GM12878 (cell line): ENCODE measurements at regions of chr11 and their contacts with region 1.

Region 1: GRCh38 chr11:67345920-67346799 is 7.2 kb downstream of the POLD4 start:
- DNase-seq: peak; percentile 24
- ATAC-seq: peak; percentile 72
- H3K4me3 ChIP-seq: no peak overlapping the region
- H3K27ac ChIP-seq: peak overlapping the region; percentile 35
- H3K4me1 ChIP-seq: peaks cover 52% of the 10 kb centered on the region
- H3K27me3 ChIP-seq: no peaks in the 10 kb centered on the region
- CTCF ChIP-seq: peak; percentile 88 to 97 (median 93); a peak in 5 of 6 replicates
- EP300 ChIP-seq: no peak
- POLR2A ChIP-seq: no peak
- RAD21 ChIP-seq: peak; percentile 69

Region 2: DNA sequence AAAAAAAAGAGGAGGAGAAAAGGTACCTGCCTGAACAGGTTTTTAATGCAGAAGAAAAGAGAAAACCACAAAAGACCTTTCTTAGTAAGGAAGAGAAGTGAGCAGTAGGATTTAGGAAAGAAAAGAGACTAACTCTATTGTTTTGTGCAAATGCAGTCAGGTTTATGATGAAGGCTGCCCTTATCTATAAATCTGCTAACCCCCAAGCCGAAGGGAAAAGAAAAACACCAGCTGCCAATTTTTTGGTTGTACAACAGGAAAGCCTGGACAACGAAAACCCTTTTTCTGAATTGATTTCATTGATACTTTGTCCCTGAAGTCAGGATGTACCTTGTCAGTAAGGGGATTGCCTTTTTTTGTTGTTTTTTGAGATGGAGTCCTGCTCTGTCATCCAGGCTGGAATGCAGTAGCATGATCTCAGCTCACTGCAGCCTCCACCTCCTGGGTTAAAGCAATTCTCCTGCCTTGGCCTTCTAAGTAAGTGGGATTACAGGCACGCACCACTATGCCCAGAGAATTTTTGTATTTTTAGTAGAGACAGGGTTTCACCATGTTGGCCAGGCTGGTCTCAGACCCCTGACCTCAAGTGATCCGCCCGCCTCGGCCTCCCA is 14.0 kb before region 1 on chr11:
- CTCF ChIA-PET with region 1: interaction called, 42 read pairs
- POLR2A ChIA-PET with region 1: interaction called, 6 read pairs
- RAD21 ChIA-PET with region 1: interaction called, 4 read pairs
- SMC1A ChIA-PET with region 1: no interaction called
- in situ Hi-C with region 1: no loop called
- intact Hi-C with region 1: no loop called
- DNase-seq: no peak
- ATAC-seq: no peak
- H3K4me3 ChIP-seq: no peak overlapping the region
- H3K27ac ChIP-seq: no peak overlapping the region
- H3K4me1 ChIP-seq: no peaks in the 10 kb centered on the region
- H3K27me3 ChIP-seq: no peaks in the 10 kb centered on the region
- CTCF ChIP-seq: no peak
- EP300 ChIP-seq: no peak
- POLR2A ChIP-seq: no peak
- RAD21 ChIP-seq: no peak

Region 3: DNA sequence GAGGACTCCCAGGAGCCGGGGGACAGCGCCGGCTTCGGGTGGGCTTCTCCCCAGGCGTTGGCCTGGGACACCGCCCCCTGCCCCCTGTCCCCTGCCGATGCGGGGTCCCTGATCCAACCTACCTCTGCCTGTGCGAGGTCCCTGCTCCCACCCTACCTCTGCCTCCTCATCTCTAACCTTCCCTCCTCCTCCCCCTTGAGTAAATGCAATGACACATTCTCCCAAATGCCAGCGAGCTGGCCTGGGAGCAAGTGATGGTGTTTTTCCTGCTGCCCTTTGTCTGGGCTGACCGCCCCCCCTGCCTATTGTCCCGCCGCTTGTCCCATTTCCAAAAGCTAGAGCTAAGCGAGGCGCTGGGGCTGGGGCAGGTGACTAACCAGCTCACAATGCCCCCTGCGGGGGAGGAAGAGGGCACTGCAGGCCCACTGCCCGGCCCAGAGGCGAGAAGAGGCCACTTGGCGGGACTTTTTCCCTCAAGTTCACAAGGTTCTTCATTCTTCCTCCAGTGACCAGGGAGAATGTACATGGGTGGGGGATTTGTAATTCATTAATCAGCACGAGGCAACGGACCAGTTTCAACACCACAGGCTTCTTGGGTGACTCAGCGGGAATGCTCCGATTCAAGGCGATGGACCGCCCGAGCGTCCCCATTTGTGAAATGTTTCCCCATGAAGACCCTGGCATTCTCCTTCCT is 27.9 kb after region 1 on chr11:
- CTCF ChIA-PET with region 1: interaction called, 1,301 read pairs
- POLR2A ChIA-PET with region 1: interaction called, 183 read pairs
- RAD21 ChIA-PET with region 1: interaction called, 525 read pairs
- SMC1A ChIA-PET with region 1: interaction called, 646 read pairs
- in situ Hi-C with region 1: no loop called
- intact Hi-C with region 1: no loop called
- DNase-seq: no peak
- ATAC-seq: peak; percentile 58
- H3K4me3 ChIP-seq: no peak overlapping the region
- H3K27ac ChIP-seq: no peak overlapping the region
- H3K4me1 ChIP-seq: peaks cover 18% of the 10 kb centered on the region
- H3K27me3 ChIP-seq: peaks cover 2 to 4% of the 10 kb centered on the region in 2 experiments; a peak in 3 of 4 replicates
- CTCF ChIP-seq: peak; percentile 52 to 65 (median 56)
- EP300 ChIP-seq: no peak
- POLR2A ChIP-seq: no peak
- RAD21 ChIP-seq: peak; percentile 36; the same call in 1 of the 2 replicates

Region 4: DNA sequence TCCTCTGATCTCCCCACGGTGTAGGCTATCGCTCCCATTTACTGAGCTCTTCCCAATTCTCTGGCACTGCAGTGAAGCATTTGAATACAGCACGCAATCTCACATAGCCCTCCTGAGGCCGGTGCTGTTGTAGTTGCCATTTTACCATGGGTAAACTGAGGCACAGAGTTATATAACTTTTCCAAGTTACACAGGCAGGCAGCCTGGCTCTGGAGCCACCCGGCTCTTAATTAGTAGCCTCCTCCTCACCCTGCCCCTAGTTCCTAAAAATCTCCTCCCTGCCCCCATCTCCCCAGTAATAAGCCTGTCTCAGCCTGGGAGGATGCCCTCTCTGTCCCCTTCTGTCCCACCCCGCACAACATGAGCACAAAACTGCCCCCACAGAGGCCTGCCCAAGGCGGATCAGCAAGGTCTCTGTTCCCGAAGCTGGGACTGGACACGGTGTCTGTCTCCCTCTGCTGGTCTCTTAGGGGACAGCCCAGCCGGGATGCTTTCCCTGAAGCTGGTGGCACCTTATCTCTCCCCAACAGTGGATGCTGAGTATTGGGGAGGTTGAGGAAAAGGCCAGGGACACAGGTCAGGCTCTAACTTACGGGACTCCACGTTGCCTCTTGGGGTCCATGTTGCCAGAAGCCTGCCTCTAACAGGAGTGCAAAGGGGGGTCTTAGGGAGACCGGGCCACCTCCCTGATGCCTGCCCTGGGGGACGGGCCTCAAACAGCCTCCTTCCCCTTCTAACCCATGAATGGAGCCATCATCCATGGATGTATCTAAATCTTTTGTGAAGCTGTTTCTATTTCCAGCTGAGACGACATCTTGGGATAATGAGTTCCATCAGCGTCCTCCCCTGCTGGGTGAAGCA is 36.3 kb after region 1 on chr11:
- CTCF ChIA-PET with region 1: interaction called, 1,301 read pairs
- POLR2A ChIA-PET with region 1: interaction called, 183 read pairs
- RAD21 ChIA-PET with region 1: interaction called, 525 read pairs
- SMC1A ChIA-PET with region 1: interaction called, 646 read pairs
- in situ Hi-C with region 1: loop called (anchors 5 kb)
- intact Hi-C with region 1: loop called (anchors 1 kb)
- DNase-seq: no peak
- ATAC-seq: peak; percentile 93
- H3K4me3 ChIP-seq: no peak overlapping the region
- H3K27ac ChIP-seq: no peak overlapping the region
- H3K4me1 ChIP-seq: peaks cover 19% of the 10 kb centered on the region
- H3K27me3 ChIP-seq: peaks cover 0 to 3% of the 10 kb centered on the region in 2 experiments; a peak in 2 of 4 replicates
- CTCF ChIP-seq: peak; percentile 99; a peak in 5 of 6 replicates
- EP300 ChIP-seq: no peak
- POLR2A ChIP-seq: no peak
- RAD21 ChIP-seq: peak; percentile 99

Region 5: GRCh38 chr11:67391304-67392132 is 45.4 kb after region 1 on chr11 and contains the start of gene RAD9A:
- CTCF ChIA-PET with region 1: interaction called, 1,301 read pairs
- POLR2A ChIA-PET with region 1: interaction called, 6 read pairs
- RAD21 ChIA-PET with region 1: interaction called, 525 read pairs
- SMC1A ChIA-PET with region 1: interaction called, 646 read pairs
- in situ Hi-C with region 1: loop called (anchors 5 kb)
- intact Hi-C with region 1: no loop called
- DNase-seq: no peak
- ATAC-seq: peak; percentile 90
- H3K4me3 ChIP-seq: peak within 1 kb of the TSS; percentile 97
- H3K27ac ChIP-seq: peak within 1 kb of the TSS; percentile 78
- H3K4me1 ChIP-seq: peaks cover 7% of the 10 kb centered on the region
- H3K27me3 ChIP-seq: no peaks in the 10 kb centered on the region
- CTCF ChIP-seq: no peak
- EP300 ChIP-seq: peak; percentile 22 to 64; a peak in 2 of 4 replicates
- POLR2A ChIP-seq: peak; percentile 83
- RAD21 ChIP-seq: no peak
- polyA plus RNA-seq, gene RAD9A: 1.1 to 3.6 TPM